B cell (primary cell): ENCODE measurements at regions of chr11 and their contacts with region 1.

Region 1: DNA sequence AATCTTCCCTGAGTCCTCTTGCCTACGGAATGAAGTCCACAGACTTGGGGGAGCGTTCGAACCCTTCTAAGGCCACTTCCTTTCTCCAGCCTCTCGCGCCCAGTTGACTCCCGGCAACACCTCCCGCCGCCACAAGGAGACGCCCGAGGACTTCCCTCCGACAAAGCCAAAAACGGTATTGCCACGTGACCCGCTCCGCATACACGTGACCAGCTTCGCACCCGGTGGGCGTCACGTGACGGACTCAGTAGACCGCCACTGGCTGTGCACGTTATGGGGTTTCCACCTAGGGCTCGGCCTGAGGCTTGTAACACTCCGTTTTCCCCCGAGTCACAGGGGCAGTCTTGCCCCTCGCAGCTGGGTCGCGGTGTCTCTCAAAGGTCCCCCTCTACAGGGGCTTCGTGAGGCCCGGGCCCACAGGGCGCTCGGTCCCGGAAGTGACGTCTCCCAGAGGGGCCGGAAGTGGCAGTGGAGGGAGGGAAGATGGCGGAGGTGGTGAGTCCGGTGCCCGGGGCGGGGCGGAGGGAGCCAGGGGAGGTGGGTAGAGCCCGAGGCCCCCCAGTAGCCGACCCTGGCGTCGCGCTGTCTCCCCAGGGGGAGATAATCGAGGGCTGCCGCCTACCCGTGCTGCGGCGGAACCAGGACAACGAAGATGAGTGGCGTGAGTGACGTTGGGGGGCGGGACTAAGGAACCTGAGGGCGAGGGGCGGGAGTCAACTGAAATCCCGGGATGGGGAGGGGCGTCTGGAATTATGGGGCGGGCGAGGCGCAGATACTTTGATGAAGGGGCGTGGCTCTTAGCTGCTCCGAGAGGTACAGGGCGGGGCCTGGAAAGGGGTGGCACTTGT is at the start of gene KAT5:
- DNase-seq: peak; percentile 100
- ATAC-seq: peak; percentile 82
- H3K4me3 ChIP-seq: peak within 1 kb of the TSS; percentile 41 to 94 (median 84)
- H3K4me3 Mint-ChIP-seq: peak within 1 kb of the TSS; percentile 92
- H3K27ac ChIP-seq: peak within 1 kb of the TSS; percentile 98 to 99
- H3K27ac Mint-ChIP-seq: peak within 1 kb of the TSS; percentile 99
- H3K4me1 ChIP-seq: peaks cover 10 to 17% of the 10 kb centered on the region in 2 donors
- H3K4me1 Mint-ChIP-seq: peaks cover 27% of the 10 kb centered on the region
- H3K27me3 ChIP-seq: no peaks in the 10 kb centered on the region
- H3K27me3 Mint-ChIP-seq: no peaks in the 10 kb centered on the region
- CTCF ChIP-seq: peak; percentile 98
- total RNA-seq, gene KAT5: 134 and 142 TPM in 2 replicates

Region 2: GRCh38 chr11:65625628-65626342 is 86.2 kb before region 1 on chr11:
- CTCF ChIA-PET with region 1: interaction called, 28 read pairs
- POLR2A ChIA-PET with region 1: interaction called, 7 read pairs
- intact Hi-C with region 1: no loop called
- DNase-seq: peak; percentile 84
- ATAC-seq: peak; percentile 95
- H3K4me3 ChIP-seq: no peak overlapping the region
- H3K4me3 Mint-ChIP-seq: no peak overlapping the region
- H3K27ac ChIP-seq: no peak overlapping the region
- H3K27ac Mint-ChIP-seq: peak overlapping the region; percentile 5
- H3K4me1 ChIP-seq: peaks cover 6 to 11% of the 10 kb centered on the region in 2 donors
- H3K4me1 Mint-ChIP-seq: peaks cover 12% of the 10 kb centered on the region
- H3K27me3 ChIP-seq: no peaks in the 10 kb centered on the region
- H3K27me3 Mint-ChIP-seq: no peaks in the 10 kb centered on the region
- CTCF ChIP-seq: peak; percentile 83

Region 3: DNA sequence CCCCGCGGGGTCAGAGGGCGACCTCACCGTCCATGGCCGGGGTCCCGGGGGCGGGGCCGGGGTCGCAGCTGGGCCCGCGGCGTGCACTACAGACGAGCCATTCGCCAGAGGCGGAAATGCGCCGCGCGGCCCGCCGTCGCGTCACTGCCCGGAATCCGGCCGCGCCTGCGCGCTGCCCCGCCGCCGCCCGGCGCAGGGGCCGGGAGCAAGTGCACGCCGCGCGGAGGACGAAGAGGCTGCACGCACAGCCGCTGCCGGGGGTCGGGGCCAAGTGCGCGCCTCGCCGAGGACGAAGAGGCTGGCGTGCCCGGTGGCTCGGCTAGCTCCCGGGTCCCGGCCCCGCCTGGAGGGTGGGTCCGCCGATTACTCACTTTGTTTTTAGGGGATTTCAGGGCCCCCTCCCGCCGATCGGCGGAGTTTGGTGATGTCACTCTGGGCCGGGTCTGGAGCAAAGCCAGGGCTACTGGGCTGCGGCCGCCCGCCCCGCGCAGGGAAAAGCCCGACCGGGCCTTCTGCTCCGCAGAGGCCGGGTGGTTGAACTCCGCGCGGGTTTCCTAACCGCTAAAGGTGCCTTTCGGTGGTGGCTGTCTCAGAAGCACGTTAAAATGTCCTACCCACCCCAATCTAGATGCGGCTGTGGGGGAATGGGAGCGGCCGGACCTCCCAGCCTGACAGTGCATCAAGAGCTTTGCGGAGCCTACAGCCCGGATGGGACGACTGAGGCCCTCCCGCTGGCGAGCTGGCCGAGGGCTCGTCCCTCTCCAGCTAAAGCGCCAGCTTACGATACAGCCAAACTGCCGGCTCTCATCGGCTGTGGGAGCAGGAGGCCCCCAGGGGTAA is 49.0 kb before region 1 on chr11 and contains the start of gene RELA:
- CTCF ChIA-PET with region 1: interaction called, 4 read pairs
- POLR2A ChIA-PET with region 1: interaction called, 5 read pairs
- intact Hi-C with region 1: loop called (anchors 2 kb)
- DNase-seq: peak; percentile 94
- ATAC-seq: peak; percentile 86
- H3K4me3 ChIP-seq: peak within 1 kb of the TSS; percentile 85 to 99 (median 95)
- H3K4me3 Mint-ChIP-seq: peak within 1 kb of the TSS; percentile 89
- H3K27ac ChIP-seq: peak within 1 kb of the TSS; percentile 97 to 100
- H3K27ac Mint-ChIP-seq: peak within 1 kb of the TSS; percentile 94
- H3K4me1 ChIP-seq: peaks cover 19 to 32% of the 10 kb centered on the region in 2 donors
- H3K4me1 Mint-ChIP-seq: peaks cover 31% of the 10 kb centered on the region
- H3K27me3 ChIP-seq: no peaks in the 10 kb centered on the region
- H3K27me3 Mint-ChIP-seq: no peaks in the 10 kb centered on the region
- CTCF ChIP-seq: no peak
- total RNA-seq, gene RELA: 154 and 160 TPM in 2 replicates

Region 4: DNA sequence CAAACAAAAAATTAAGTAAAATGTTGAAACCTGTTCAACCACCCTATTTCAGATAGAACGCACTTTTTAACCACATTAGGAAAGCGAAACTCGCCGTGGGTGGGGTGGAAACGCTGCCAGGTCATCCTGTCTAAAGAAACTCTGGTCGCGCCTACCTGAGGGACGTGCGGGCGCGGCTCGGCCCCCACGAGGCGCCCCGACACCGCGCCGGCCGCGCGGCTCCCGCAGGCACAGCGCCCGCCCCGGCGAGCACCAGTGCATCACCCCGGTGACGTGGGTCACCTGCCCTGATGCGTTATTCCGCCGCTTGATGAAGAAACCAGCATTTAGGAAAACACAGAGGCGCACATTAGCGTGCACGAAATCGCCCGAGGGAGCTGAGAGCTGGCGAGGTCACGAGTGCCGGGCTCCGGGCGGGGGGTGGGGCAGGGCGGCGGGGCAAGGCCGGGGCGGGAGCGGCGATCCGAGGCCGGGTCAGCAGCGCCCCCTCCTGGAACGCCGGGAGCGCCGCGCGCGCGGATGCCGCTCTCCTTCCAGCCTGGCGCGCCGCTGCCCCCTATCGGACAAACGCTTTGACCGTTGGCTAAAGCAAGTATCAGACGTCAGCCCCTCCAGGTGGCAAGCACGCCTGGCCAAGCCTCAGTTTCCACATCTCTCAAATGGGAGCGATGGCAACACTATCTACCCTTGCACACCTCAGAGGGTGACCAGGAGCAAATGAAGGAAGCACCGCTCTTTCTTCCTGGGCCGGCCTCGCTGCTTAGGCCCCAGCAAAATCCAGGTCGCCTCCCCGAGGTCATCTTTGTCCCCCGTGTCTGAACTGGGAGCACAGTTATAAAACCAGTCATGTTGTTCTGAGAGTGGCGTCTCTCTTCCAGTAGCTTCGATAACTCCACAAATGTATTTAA is 106.1 kb after region 1 on chr11:
- CTCF ChIA-PET with region 1: interaction called, 49 read pairs
- POLR2A ChIA-PET with region 1: interaction called, 3 read pairs
- intact Hi-C with region 1: loop called (anchors 1 kb)
- DNase-seq: peak; percentile 95
- ATAC-seq: peak; percentile 98
- H3K4me3 ChIP-seq: peak overlapping the region; percentile 43 to 66 (median 52)
- H3K4me3 Mint-ChIP-seq: peak overlapping the region; percentile 74
- H3K27ac ChIP-seq: peak overlapping the region; percentile 54 to 66
- H3K27ac Mint-ChIP-seq: peak overlapping the region; percentile 75
- H3K4me1 ChIP-seq: peaks cover 6 to 13% of the 10 kb centered on the region in 2 donors
- H3K4me1 Mint-ChIP-seq: peaks cover 9% of the 10 kb centered on the region
- H3K27me3 ChIP-seq: no peaks in the 10 kb centered on the region
- H3K27me3 Mint-ChIP-seq: no peaks in the 10 kb centered on the region
- CTCF ChIP-seq: peak; percentile 100

Region 5: DNA sequence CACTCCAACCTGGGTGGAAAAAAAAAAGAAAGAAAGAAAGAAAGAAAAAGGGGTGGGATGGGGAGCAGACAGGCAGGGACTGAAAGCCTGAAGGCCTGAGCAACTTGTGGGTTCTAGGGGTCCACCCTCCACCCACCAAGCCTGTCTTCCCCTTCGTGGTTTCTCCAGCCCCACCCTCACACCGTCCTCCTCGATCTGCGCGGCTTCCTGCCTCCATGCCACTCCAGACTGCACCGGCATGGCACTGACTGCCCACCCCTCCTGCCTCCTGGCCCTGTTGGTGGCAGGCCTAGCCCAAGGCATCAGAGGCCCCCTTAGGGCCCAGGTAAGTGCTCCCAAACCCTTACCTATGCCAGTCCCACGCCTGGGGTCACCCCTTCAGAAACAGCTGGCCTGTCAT is 167.6 kb after region 1 on chr11 and contains the start of gene CTSW:
- CTCF ChIA-PET with region 1: interaction called, 26 read pairs
- POLR2A ChIA-PET with region 1: interaction called, 12 read pairs
- intact Hi-C with region 1: loop called (anchors 1 kb)
- DNase-seq: no peak
- ATAC-seq: no peak
- H3K4me3 ChIP-seq: no peak within 1 kb of the TSS
- H3K4me3 Mint-ChIP-seq: no peak within 1 kb of the TSS
- H3K27ac ChIP-seq: no peak within 1 kb of the TSS
- H3K27ac Mint-ChIP-seq: peak within 1 kb of the TSS; percentile 46
- H3K4me1 ChIP-seq: peaks cover 5 to 25% of the 10 kb centered on the region in 2 donors
- H3K4me1 Mint-ChIP-seq: peaks cover 20% of the 10 kb centered on the region
- H3K27me3 ChIP-seq: no peaks in the 10 kb centered on the region
- H3K27me3 Mint-ChIP-seq: no peaks in the 10 kb centered on the region
- CTCF ChIP-seq: no peak
- total RNA-seq, gene CTSW: 0.84 and 1.3 TPM in 2 replicates

Region 6: GRCh38 chr11:66268283-66268951 is 556.4 kb after region 1 on chr11 and contains the start of gene RAB1B:
- CTCF ChIA-PET with region 1: no interaction called
- POLR2A ChIA-PET with region 1: no interaction called
- intact Hi-C with region 1: loop called (anchors 5 kb)
- DNase-seq: peak; percentile 100
- ATAC-seq: peak; percentile 77
- H3K4me3 ChIP-seq: peak within 1 kb of the TSS; percentile 83 to 100 (median 98)
- H3K4me3 Mint-ChIP-seq: peak within 1 kb of the TSS; percentile 95
- H3K27ac ChIP-seq: peak within 1 kb of the TSS; percentile 81 to 97
- H3K27ac Mint-ChIP-seq: peak within 1 kb of the TSS; percentile 96
- H3K4me1 ChIP-seq: peaks cover 14 to 27% of the 10 kb centered on the region in 2 donors
- H3K4me1 Mint-ChIP-seq: peaks cover 29% of the 10 kb centered on the region
- H3K27me3 ChIP-seq: no peaks in the 10 kb centered on the region
- H3K27me3 Mint-ChIP-seq: no peaks in the 10 kb centered on the region
- CTCF ChIP-seq: no peak
- total RNA-seq, gene RAB1B: 76.0 and 77.8 TPM in 2 replicates